ENCODE measurements at regions of chr2 and their contacts with region 1.

Region 1: GRCh38 chr2:43226558-43226954 is at the start of gene ZFP36L2:
- DNase-seq: peak; percentile 95 to 99 (median 98)
- ATAC-seq: peak; percentile 77
- H3K4me3 ChIP-seq: peak within 1 kb of the TSS; percentile 72 to 83
- H3K27ac ChIP-seq: peak within 1 kb of the TSS; percentile 99
- H3K4me1 ChIP-seq: peaks cover 11 to 49% of the 10 kb centered on the region in 2 donors
- H3K27me3 ChIP-seq: no peaks in the 10 kb centered on the region
- CTCF ChIP-seq: peak in 1 of 2 donors; percentile 17
- polyA plus RNA-seq, gene ZFP36L2: 93.4 to 131 (median 109) TPM

Region 2: GRCh38 chr2:42964439-42965083 is 262.0 kb before region 1 on chr2:
- intact Hi-C with region 1: loop called in 1 of 2 experiments (anchors 10 kb)
- DNase-seq: peak in 2 of 4 donors; percentile 74 to 75
- ATAC-seq: peak; percentile 44
- H3K4me3 ChIP-seq: no peak overlapping the region
- H3K27ac ChIP-seq: peak overlapping the region; percentile 5 to 33
- H3K4me1 ChIP-seq: peaks cover 28 to 71% of the 10 kb centered on the region in 2 donors
- H3K27me3 ChIP-seq: peaks cover 0 to 5% of the 10 kb centered on the region in 2 donors
- CTCF ChIP-seq: no peak

Region 3: GRCh38 chr2:42974721-42975717 is 251.5 kb before region 1 on chr2:
- intact Hi-C with region 1: loop called in 1 of 2 experiments (anchors 5 kb)
- DNase-seq: peak; percentile 71 to 93 (median 80)
- ATAC-seq: peak; percentile 95
- H3K4me3 ChIP-seq: peak overlapping the region in 1 of 2 donors; percentile 33
- H3K27ac ChIP-seq: peak overlapping the region in 1 of 2 donors; percentile 71
- H3K4me1 ChIP-seq: peaks cover 4 to 29% of the 10 kb centered on the region in 2 donors
- H3K27me3 ChIP-seq: peaks cover 0 to 3% of the 10 kb centered on the region in 2 donors
- CTCF ChIP-seq: peak; percentile 90

Region 4: DNA sequence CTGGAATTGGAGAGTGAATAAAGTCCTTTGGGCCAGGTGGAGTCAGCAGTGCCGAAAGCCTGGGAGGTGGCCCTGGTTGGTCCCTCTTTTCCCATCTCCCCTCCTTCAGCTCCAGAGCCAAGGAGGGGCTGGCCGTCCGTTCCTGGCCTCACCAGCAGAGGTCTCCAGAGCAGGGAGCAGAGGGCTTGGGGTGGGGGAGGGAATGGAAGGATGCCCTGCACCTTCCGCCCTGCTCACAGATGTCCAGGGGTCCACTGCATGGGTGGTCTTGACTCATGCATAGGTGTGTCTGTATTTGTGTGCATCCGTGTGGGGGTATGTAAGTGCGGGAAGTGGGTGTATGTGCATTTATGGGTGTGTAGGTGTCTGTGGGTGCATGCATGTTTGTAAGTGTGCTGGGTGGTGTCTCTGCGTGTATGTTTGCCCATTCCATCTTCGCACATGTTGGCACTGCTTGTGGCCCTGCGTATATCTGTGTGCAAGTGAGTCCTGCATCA is 202.0 kb before region 1 on chr2:
- intact Hi-C with region 1: loop called in 1 of 2 experiments (anchors 10 kb)
- DNase-seq: peak in 3 of 4 donors; percentile 63 to 85 (median 74)
- ATAC-seq: peak; percentile 79
- H3K4me3 ChIP-seq: no peak overlapping the region
- H3K27ac ChIP-seq: no peak overlapping the region
- H3K4me1 ChIP-seq: peaks cover 4 to 22% of the 10 kb centered on the region in 2 donors
- H3K27me3 ChIP-seq: no peaks in the 10 kb centered on the region
- CTCF ChIP-seq: peak; percentile 72 to 73

Region 5: DNA sequence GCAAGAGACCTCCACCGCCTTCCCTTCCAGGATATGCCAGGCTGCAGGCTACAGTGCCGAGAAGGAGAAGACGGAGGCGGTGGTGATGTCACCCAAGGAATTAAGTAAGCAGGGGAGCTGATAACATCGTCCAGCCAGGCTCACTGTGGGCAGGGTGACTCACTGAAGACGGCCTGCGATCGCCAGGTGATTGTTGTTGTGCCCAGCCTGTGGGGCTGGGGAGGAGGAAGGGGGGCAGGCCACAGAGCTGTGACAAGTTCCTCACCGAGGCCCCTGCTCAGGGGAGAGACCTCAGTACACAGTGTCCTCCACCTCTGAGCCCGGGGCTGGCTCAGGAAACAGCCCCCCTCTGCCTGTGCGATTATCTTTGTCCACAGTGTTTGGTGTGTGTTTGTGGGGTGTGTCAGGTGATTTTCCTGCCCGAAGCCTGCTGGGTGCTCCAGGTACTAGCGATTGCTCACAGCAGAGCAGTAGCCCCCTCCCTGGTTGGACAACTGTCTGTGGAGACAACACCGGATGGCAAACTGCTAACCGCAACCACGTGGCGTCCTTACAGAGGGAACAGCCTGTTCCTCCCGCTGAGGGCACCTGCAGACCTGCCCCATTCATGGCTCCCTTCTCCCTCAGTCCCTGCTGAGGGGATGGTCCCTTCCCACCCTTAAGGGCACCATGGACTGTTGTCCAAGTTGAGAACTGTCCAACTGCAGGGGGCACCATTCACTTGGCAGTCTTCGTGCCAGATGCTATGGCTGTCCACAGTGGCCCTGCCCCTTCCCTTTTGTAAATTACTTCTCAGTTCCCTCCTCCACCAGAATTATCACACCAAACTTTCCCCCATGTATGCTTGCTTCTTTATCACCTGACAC is 95.3 kb before region 1 on chr2:
- intact Hi-C with region 1: loop called in 1 of 2 experiments (anchors 10 kb)
- DNase-seq: peak in 2 of 4 donors; percentile 86 to 92
- ATAC-seq: peak; percentile 54
- H3K4me3 ChIP-seq: peak overlapping the region in 1 of 2 donors; percentile 9
- H3K27ac ChIP-seq: peak overlapping the region; percentile 70 to 96
- H3K4me1 ChIP-seq: peaks cover 23 to 99% of the 10 kb centered on the region in 2 donors
- H3K27me3 ChIP-seq: no peaks in the 10 kb centered on the region
- CTCF ChIP-seq: peak; percentile 28 to 61

Region 6: GRCh38 chr2:43318791-43319190 is 92.2 kb after region 1 on chr2:
- intact Hi-C with region 1: no loop called
- DNase-seq: no peak
- ATAC-seq: no peak
- H3K4me3 ChIP-seq: no peak overlapping the region
- H3K27ac ChIP-seq: no peak overlapping the region
- H3K4me1 ChIP-seq: peaks cover 5 to 10% of the 10 kb centered on the region in 2 donors
- H3K27me3 ChIP-seq: no peaks in the 10 kb centered on the region
- CTCF ChIP-seq: no peak